GM12878 (cell line): ENCODE measurements at regions of chr6 and their contacts with region 1.

Region 1: DNA sequence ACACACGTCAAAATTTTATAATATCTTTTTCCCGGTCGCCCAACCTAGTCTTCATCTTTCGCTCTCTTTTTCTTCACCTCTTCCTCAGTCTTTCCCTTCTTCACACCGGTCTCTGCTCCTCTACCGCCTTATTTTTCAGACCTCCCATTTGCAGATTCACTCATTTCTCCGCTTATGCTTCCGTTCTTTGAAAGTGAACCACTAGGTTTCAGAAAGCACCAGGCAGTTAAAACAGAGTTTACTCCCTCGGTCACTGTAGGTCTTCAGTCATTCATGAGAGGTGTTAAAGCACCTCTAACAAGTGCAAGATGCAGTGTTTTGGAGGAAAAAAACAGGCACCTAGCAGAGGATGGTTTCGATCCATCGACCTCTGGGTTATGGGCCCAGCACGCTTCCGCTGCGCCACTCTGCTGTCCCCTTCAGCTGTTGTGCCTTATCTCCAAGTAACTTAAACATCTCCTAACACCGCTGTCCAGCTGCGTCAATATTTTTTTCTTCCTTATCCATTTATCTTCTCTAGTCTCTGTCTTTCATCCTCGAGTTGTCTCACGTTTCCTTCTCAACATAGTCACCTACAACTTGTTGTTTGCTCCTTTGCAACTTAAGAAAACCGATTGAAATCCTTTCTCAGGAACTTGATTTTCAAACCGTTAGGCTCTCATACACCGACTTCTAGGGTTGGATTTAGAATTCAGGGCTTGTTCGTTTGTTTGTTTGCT is 119.7 kb upstream of the ZNF184 start:
- DNase-seq: peak; percentile 89
- ATAC-seq: peak; percentile 94
- H3K4me3 ChIP-seq: peak overlapping the region; percentile 81
- H3K27ac ChIP-seq: peak overlapping the region; percentile 9; the same call in 1 of the 2 replicates
- H3K4me1 ChIP-seq: peaks cover 11% of the 10 kb centered on the region
- H3K27me3 ChIP-seq: no peaks in the 10 kb centered on the region
- CTCF ChIP-seq: no peak
- EP300 ChIP-seq: peak in 1 of 2 experiments; percentile 84; a peak in 1 of 4 replicates
- POLR2A ChIP-seq: no peak
- RAD21 ChIP-seq: no peak

Region 2: DNA sequence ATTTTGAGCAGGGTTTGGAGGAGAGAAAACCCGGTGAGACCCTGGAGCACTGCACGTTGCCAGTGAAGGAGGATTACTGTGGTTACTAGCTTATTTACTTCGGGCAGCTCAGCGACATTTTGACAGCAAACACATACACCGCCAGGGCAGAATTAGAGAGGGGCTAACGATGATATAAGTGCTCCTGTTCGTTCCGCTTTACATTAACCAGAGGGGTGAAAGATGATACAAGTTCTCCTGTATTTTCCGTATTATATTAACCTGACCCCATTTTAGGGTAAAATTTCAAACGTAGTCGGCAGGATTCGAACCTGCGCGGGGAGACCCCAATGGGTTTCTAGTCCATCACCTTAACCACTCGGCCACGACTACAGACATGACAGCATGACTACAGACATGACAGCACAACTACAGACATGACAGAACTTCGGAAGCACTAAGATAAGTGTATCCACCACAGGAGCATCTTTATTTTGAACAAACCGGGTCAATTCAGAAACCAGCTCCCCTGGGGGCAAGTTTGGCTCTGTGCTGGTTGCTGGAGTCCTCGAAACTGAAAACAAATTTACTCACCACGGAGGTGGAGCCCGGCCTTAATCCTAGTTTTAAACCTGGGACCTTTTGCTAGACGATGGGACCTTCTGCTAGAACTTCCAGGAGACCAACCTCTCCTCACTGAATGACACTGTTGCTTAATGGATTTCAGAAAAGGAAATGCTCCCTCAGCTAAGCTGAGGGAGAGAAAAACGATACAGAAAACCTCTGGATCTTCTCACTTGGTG is 39.3 kb before region 1 on chr6:
- CTCF ChIA-PET with region 1: no interaction called
- POLR2A ChIA-PET with region 1: no interaction called
- RAD21 ChIA-PET with region 1: interaction called, 5 read pairs
- SMC1A ChIA-PET with region 1: interaction called, 6 read pairs
- in situ Hi-C with region 1: no loop called
- intact Hi-C with region 1: loop called (anchors 2 kb)
- DNase-seq: peak; percentile 82
- ATAC-seq: peak; percentile 90
- H3K4me3 ChIP-seq: peak overlapping the region; percentile 44
- H3K27ac ChIP-seq: 0 out of 2 replicates have a peak overlapping the region, but pooled peaks have one; percentile 26
- H3K4me1 ChIP-seq: no peaks in the 10 kb centered on the region
- H3K27me3 ChIP-seq: no peaks in the 10 kb centered on the region; a peak in 2 of 4 replicates
- CTCF ChIP-seq: no peak
- EP300 ChIP-seq: no peak
- POLR2A ChIP-seq: no peak
- RAD21 ChIP-seq: no peak